CD14-positive monocyte (primary cell): ENCODE measurements at regions of chr14 and their contacts with region 1.

Region 1: GRCh38 chr14:70873627-70874026 is 33.6 kb upstream of the PCNX1 start:
- DNase-seq: peak; percentile 35 to 65 (median 51)
- H3K4me3 ChIP-seq: no peak overlapping the region
- H3K4me3 Mint-ChIP-seq: no peak overlapping the region
- H3K27ac ChIP-seq: no peak overlapping the region
- H3K27ac Mint-ChIP-seq: peak overlapping the region in 2 of 7 donors; percentile 27 to 80
- H3K4me1 ChIP-seq: peaks cover 2 to 14% of the 10 kb centered on the region in 2 donors
- H3K4me1 Mint-ChIP-seq: peaks cover 13% of the 10 kb centered on the region
- H3K27me3 ChIP-seq: no peaks in the 10 kb centered on the region
- H3K27me3 Mint-ChIP-seq: peaks cover 0 to 3% (median 0%) of the 10 kb centered on the region in 3 donors
- CTCF ChIP-seq: peak; percentile 49

Region 2: DNA sequence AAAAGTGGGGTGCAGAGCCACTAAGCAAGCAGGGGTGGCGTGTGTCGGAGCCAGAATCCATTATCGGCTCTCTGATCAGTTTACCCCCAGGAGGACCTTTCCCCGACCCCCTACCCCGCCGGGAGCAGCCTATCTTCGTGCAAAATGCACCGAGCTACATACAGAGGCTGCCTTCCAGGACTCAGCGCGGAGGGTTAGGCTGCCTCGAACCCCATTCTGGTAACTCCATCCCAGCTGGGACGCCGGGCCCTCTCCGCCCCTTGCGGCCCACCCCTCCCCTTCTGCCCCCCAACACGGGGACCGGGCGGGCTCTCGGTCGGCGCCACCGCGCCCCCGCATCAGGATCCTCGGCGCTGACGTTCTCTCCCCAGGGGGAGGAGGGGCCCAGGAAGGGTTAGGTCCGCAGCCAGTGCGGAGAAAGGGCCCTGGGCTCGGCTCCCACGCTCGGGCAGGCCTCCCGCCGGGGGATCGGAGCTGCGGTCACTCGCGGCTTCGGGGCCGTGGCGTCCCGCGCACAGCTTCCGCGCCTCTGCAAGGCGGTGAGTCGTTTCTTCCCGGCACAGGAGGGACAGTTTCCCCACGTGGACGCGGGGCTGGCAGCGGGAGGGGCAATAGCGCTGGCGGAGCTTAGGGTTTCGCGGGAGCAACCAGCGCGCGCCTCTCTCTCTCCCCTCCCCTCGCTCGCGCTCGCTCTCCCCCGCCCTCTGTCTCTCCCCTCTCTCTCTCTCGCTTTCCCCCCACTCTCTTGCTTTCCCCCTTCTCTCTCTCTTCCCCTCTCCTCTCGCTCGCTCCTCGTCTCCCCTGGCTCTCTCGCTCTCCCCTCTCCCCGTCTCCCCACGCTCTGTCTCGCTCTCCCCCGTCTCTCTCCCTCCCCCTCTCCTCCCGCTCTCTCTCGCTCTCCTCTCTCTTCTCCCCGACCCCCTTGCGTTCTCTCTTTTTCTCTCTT is 51.8 kb before region 1 on chr14:
- intact Hi-C with region 1: no loop called
- DNase-seq: peak; percentile 37 to 53 (median 39)
- H3K4me3 ChIP-seq: peak overlapping the region; percentile 24 to 81 (median 37)
- H3K4me3 Mint-ChIP-seq: peak overlapping the region; percentile 80 to 87
- H3K27ac ChIP-seq: no peak overlapping the region
- H3K27ac Mint-ChIP-seq: peak overlapping the region in 1 of 7 donors; percentile 52
- H3K4me1 ChIP-seq: peaks cover 10 to 20% of the 10 kb centered on the region in 2 donors
- H3K4me1 Mint-ChIP-seq: peaks cover 20% of the 10 kb centered on the region
- H3K27me3 ChIP-seq: peaks cover 31 to 59% of the 10 kb centered on the region in 2 donors
- H3K27me3 Mint-ChIP-seq: peaks cover 38 to 59% (median 57%) of the 10 kb centered on the region in 3 donors
- CTCF ChIP-seq: no peak

Region 3: GRCh38 chr14:70919774-70920173 is 46.1 kb after region 1 on chr14:
- intact Hi-C with region 1: loop called in 1 of 2 experiments (anchors 10 kb)
- DNase-seq: peak in 2 of 3 donors; percentile 21 to 46
- H3K4me3 ChIP-seq: no peak overlapping the region
- H3K4me3 Mint-ChIP-seq: no peak overlapping the region
- H3K27ac ChIP-seq: peak overlapping the region in 1 of 2 donors; percentile 49
- H3K27ac Mint-ChIP-seq: peak overlapping the region in 5 of 7 donors; percentile 18 to 81 (median 56)
- H3K4me1 ChIP-seq: peaks cover 31 to 45% of the 10 kb centered on the region in 2 donors
- H3K4me1 Mint-ChIP-seq: peaks cover 65% of the 10 kb centered on the region
- H3K27me3 ChIP-seq: no peaks in the 10 kb centered on the region
- H3K27me3 Mint-ChIP-seq: no peaks in the 10 kb centered on the region
- CTCF ChIP-seq: no peak